Heart right ventricle (tissue), 16 donors: ENCODE measurements at regions of chr9 and their contacts with region 1.

Region 1: GRCh38 chr9:4679268-4680172 is at the start of gene CDC37L1:
- DNase-seq: peak; percentile 99
- ATAC-seq: peak; percentile 99 to 100 (median 99)
- H3K4me3 ChIP-seq: peak within 1 kb of the TSS; percentile 67 to 96 (median 78)
- H3K27ac ChIP-seq: peak within 1 kb of the TSS; percentile 91 to 100 (median 96)
- H3K4me1 ChIP-seq: peaks cover 0 to 40% (median 26%) of the 10 kb centered on the region in 9 donors
- H3K27me3 ChIP-seq: no peaks in the 10 kb centered on the region
- CTCF ChIP-seq: peak; percentile 49 to 81 (median 72)
- total RNA-seq, gene CDC37L1: 29.8 to 58.4 (median 36.6) TPM

Region 2: DNA sequence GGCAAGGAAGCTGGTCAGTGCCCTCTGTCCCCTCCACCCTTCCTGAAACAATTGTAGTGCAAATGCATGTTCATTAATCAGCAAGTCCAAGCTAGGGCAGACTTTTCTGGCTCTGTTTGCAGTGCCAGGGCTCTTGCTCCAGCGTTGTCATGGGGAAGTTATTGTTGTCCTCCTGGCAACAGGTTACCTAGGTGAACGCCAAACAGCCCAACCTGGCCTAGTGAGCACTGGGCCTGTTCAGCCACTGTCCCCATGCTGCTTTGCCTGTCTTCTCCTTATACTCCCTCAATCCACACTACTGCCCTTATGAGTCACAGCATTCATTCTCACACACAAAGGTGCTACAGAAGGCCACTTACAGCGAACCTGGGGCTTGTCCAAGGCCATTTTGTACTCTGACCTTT is 345.1 kb before region 1 on chr9:
- intact Hi-C with region 1: no loop called
- DNase-seq: peak; percentile 27 to 57
- ATAC-seq: peak; percentile 61 to 99 (median 88)
- H3K4me3 ChIP-seq: no peak overlapping the region
- H3K27ac ChIP-seq: peak overlapping the region in 8 of 10 donors; percentile 7 to 74 (median 57)
- H3K4me1 ChIP-seq: peaks cover 0 to 21% (median 16%) of the 10 kb centered on the region in 9 donors
- H3K27me3 ChIP-seq: no peaks in the 10 kb centered on the region
- CTCF ChIP-seq: no peak

Region 3: GRCh38 chr9:4640027-4640426 is 39.5 kb before region 1 on chr9:
- intact Hi-C with region 1: no loop called
- DNase-seq: no peak
- ATAC-seq: peak in 1 of 8 donors; percentile 39
- H3K4me3 ChIP-seq: no peak overlapping the region
- H3K27ac ChIP-seq: no peak overlapping the region
- H3K4me1 ChIP-seq: no peaks in the 10 kb centered on the region
- H3K27me3 ChIP-seq: no peaks in the 10 kb centered on the region
- CTCF ChIP-seq: peak; percentile 15 to 72 (median 55)

Region 4: GRCh38 chr9:4662108-4662988 is 17.2 kb before region 1 on chr9 and contains the start of gene PLPP6:
- intact Hi-C with region 1: loop called in 1 of 10 experiments (anchors 1 kb)
- DNase-seq: peak; percentile 88 to 89
- ATAC-seq: peak; percentile 94 to 97 (median 95)
- H3K4me3 ChIP-seq: peak within 1 kb of the TSS; percentile 75 to 97 (median 90)
- H3K27ac ChIP-seq: peak within 1 kb of the TSS; percentile 30 to 91 (median 84)
- H3K4me1 ChIP-seq: peaks cover 0 to 56% (median 43%) of the 10 kb centered on the region in 9 donors
- H3K27me3 ChIP-seq: no peaks in the 10 kb centered on the region
- CTCF ChIP-seq: peak; percentile 24 to 74 (median 58)
- total RNA-seq, gene PLPP6: 2.2 to 4.1 (median 2.6) TPM